ENCODE measurements at regions of chr1 and their contacts with region 1.

Region 1: DNA sequence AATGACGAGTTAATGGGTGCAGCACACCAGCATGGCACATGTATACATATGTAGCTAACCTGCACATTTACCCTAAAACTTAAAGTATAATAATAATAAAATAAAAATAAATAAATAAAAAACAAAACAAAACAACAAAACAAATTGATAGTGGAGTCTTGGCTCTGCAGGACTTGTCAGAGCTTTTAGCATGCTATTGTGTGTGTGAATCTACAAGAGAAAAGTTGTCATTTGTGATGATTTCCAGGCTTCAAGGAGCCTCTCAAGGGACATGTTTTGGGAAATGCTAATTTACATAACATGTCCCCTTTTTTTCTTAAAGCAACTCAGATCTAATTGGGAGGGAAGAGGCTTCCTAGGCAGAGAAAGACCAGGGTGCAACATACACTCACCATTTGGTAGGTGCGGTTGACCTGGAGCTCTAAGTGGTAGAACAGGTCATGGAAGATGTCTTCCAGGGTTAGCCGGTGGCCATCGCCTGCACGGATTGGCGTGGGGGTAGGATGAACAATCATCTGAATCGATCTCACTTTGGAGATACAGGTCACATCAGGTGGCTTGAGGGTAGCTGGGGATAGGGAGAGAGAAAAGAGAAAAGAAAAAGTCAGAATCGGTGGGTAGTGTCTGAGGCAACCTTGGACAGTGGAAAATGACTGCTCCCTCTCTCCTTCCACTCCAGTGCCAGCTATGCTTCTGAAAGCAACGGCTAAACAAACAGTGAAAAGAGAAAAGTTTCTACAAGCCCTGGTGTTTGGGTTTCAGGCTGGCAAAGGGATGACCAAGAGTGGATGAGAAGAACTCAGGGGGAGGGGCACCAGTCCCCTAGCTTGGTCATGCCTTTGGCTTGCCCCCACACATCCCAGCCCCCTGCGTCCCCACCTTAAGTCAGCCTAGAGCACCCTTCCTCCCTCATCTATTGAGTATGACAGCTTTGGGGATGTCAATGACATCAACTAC is 8.8 kb downstream of the IL22RA1 start:
- DNase-seq: no peak
- H3K4me3 ChIP-seq: no peak overlapping the region
- H3K27ac ChIP-seq: no peak overlapping the region
- H3K4me1 ChIP-seq: no peaks in the 10 kb centered on the region
- H3K27me3 ChIP-seq: no peaks in the 10 kb centered on the region
- CTCF ChIP-seq: no peak
- POLR2A ChIP-seq: no peak

Region 2: GRCh38 chr1:23263380-23263887 is 870.7 kb before region 1 on chr1:
- intact Hi-C with region 1: loop called (anchors 5 kb)
- DNase-seq: no peak
- H3K4me3 ChIP-seq: no peak overlapping the region
- H3K27ac ChIP-seq: no peak overlapping the region
- H3K4me1 ChIP-seq: no peaks in the 10 kb centered on the region
- H3K27me3 ChIP-seq: no peaks in the 10 kb centered on the region
- CTCF ChIP-seq: no peak
- POLR2A ChIP-seq: no peak

Measured in vagina (tissue), 2 donors.